ENCODE measurements at regions of chr11 and their contacts with region 1.

Region 1: GRCh38 chr11:77411717-77412441 is 62.0 kb downstream of the PAK1 start:
- DNase-seq: peak; percentile 88
- H3K4me3 Mint-ChIP-seq: peak overlapping the region; percentile 81
- H3K27ac Mint-ChIP-seq: peak overlapping the region; percentile 78
- H3K4me1 Mint-ChIP-seq: peaks cover 36% of the 10 kb centered on the region
- H3K27me3 Mint-ChIP-seq: no peaks in the 10 kb centered on the region

Region 2: DNA sequence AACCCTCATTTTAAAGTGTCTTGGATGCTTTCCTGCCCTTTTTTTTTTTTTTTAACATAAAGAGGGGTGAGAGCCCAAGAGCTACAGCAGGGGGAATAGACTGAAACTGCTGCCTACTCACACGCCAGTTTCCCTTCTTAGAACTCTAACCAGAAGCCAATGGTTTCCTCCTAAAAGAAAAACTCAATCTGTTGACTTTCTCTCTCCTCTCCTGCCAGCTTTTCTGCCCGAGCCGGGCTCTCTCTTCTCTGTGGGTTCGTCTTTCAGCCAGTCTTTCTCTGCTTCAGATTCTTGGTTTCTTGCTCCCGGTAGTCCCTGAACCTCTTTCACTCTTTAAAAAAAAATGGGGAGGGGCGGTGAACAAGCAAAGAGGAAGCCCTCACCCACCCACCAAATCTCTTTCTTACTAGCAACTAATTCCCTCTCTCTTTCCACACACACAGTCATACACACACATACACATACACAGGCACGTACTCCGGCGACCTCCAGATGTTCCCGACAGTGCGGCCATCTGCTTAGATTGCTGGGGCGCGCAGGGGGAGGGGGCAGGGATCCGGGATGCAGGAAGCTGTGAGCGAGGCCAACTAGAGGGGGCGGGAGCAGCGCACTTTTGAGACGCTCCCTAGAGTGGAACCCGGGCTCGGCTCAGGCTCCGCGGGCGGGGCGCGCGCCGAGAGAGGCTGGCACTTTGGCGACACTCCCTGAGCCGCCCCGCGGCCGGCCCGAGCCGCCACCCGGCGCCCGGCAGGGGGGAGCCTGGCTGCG is 629.2 kb before region 1 on chr11:
- CTCF ChIA-PET with region 1: no interaction called
- intact Hi-C with region 1: no loop called
- DNase-seq: peak; percentile 67
- H3K4me3 Mint-ChIP-seq: peak overlapping the region; percentile 63
- H3K27ac Mint-ChIP-seq: peak overlapping the region; percentile 65
- H3K4me1 Mint-ChIP-seq: peaks cover 8% of the 10 kb centered on the region
- H3K27me3 Mint-ChIP-seq: peaks cover 32% of the 10 kb centered on the region

Region 3: GRCh38 chr11:77401486-77402217 is 10.2 kb before region 1 on chr11:
- CTCF ChIA-PET with region 1: interaction called, 5 read pairs
- intact Hi-C with region 1: loop called (anchors 1 kb)
- DNase-seq: no peak
- H3K4me3 Mint-ChIP-seq: no peak overlapping the region
- H3K27ac Mint-ChIP-seq: no peak overlapping the region
- H3K4me1 Mint-ChIP-seq: peaks cover 22% of the 10 kb centered on the region
- H3K27me3 Mint-ChIP-seq: no peaks in the 10 kb centered on the region

Region 4: GRCh38 chr11:77449060-77449521 is 37.2 kb after region 1 on chr11:
- CTCF ChIA-PET with region 1: no interaction called
- intact Hi-C with region 1: loop called (anchors 2 kb)
- DNase-seq: no peak
- H3K4me3 Mint-ChIP-seq: no peak overlapping the region
- H3K27ac Mint-ChIP-seq: peak overlapping the region; percentile 7
- H3K4me1 Mint-ChIP-seq: peaks cover 31% of the 10 kb centered on the region
- H3K27me3 Mint-ChIP-seq: no peaks in the 10 kb centered on the region

Region 5: DNA sequence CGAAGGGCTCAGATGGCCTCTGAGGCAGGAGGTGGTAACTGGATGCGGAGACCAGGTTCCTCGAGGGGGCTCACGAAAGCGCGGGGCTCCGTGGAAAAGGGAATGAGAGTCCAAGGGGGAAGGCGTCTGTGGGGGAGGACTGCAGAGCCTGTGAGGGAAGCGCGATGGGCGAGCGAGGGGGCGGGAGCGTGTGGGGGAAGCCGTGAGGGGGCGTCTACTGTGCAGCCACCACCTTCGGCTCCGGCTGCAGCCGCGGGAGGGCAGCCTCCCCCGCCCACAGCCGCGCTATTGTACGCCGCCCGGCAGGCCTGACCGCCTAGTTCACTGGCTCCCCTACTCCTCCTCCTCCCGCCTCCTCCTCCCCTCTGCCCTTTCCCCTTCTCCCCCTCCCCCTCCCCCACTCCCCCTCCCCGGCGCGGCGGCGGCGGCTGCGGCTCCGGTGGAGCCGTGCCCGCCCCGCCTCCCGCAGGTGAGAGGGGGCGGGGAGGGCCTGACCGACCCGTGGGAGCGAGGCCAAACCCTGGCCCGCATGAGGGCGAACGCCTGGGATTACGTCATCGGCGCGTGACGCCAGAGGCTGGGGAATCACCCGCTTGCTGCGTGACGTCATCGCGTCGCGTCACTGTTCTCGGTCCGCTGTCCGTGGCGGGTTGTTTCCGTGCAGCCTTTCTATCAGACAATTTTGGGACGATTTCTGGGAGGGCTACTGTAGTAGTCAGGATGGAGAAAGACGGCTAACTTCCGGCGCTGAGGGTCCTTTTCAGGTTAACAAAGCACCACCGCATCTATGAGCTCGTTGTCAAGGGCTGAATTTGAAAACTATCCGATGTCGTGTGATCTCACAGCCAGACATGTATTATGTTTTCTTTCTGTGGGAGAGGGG is 62.2 kb after region 1 on chr11 and contains the start of gene PAK1:
- CTCF ChIA-PET with region 1: interaction called, 6 read pairs
- intact Hi-C with region 1: loop called (anchors 2 kb)
- DNase-seq: peak; percentile 92
- H3K4me3 Mint-ChIP-seq: peak within 1 kb of the TSS; percentile 80
- H3K27ac Mint-ChIP-seq: peak within 1 kb of the TSS; percentile 74
- H3K4me1 Mint-ChIP-seq: peaks cover 13% of the 10 kb centered on the region
- H3K27me3 Mint-ChIP-seq: peaks cover 9% of the 10 kb centered on the region
- total RNA-seq, gene PAK1: 45.8 to 49.5 TPM

Region 6: DNA sequence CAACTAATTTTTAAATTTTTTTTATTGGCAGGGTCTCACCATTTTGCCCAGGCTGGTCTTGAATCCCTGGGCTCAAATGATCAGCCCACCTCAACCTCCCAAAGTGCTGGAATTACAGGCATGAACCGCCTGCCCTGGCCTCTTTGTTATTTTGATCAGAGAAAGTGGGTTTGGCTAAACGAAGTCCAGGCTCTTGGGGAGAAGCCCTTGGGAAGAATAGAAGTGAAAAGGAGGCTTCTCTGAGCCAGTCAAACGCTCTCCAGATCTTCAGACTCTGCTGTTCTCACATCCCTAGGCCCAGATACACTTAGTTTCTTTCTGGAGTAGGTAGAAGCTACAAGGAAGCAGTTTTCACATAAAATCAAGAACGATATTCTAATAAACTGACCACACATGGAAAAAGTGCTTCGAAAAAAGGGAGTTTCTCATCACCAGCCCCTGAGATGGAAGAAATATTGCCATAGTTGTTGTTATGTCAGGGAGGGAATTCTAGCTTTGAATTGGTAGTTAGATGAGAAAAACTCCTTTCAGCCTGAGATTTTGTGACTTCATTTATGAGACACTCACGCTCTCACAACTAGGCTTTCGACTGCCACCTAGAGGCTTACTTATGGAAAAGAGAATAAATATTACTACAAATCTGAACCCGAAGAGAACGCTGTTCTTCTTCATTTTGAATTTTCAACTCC is 136.1 kb after region 1 on chr11:
- CTCF ChIA-PET with region 1: interaction called, 8 read pairs
- intact Hi-C with region 1: loop called (anchors 1 kb)
- DNase-seq: peak; percentile 55
- H3K4me3 Mint-ChIP-seq: no peak overlapping the region
- H3K27ac Mint-ChIP-seq: no peak overlapping the region
- H3K4me1 Mint-ChIP-seq: peaks cover 2% of the 10 kb centered on the region
- H3K27me3 Mint-ChIP-seq: no peaks in the 10 kb centered on the region

Region 7: GRCh38 chr11:77619576-77620198 is 207.8 kb after region 1 on chr11:
- CTCF ChIA-PET with region 1: no interaction called
- intact Hi-C with region 1: loop called (anchors 2 kb)
- DNase-seq: no peak
- H3K4me3 Mint-ChIP-seq: no peak overlapping the region
- H3K27ac Mint-ChIP-seq: no peak overlapping the region
- H3K4me1 Mint-ChIP-seq: no peaks in the 10 kb centered on the region
- H3K27me3 Mint-ChIP-seq: no peaks in the 10 kb centered on the region

Measured in activated naive CD4-positive, alpha-beta T cell treated with anti-CD3 and anti-CD28 coated beads for 36 hours (primary cell).